ENCODE measurements at regions of chr9 and their contacts with region 1.

Region 1: DNA sequence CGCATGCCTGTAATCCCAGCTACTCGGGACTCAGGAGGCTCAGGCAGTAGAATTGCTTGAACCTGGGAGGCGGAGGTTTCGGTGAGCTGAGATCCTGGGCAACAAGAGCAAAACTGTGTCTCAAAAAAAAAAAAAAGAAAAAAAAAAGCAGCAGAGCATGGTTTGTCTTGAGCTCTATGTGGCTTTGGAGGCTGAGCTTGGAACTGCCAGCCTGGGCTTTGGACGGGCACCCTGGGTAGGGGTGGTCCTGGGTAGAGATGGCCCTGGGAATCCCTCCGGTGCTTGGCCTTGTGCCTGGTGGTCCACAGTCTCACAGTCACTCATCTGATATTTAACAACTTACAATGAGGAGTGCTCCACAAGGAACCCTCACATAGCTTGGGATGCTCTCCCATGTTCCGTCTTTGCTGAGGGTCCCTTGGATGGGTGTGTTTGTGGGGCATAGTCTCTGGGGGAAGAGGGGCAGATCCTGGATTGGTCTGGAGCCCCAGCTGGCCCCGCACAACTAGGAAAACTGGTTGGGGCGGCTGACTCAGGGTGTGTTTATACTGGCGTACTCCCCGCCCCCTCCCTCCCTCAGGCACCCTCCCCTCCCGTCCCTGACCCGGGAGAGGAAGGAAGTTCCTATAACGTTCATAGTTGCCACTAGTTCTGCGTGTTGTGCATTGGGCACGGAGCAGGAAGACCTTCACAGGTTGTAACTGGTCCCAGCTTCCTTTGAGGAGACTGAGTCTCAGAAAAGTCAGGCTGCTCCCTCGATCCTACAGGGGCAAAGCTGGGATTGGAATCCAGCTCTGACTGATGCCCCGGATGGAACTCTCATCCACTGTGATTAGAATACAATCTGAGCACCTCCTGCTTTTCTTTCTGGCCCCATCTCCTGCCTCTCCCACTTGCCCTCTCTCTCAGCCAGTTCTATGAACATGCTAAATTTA is 11.2 kb downstream of the IER5L start:
- DNase-seq: peak; percentile 90
- H3K4me3 ChIP-seq: no peak overlapping the region
- H3K27ac ChIP-seq: peak overlapping the region; percentile 88
- H3K4me1 ChIP-seq: peaks cover 31% of the 10 kb centered on the region
- H3K27me3 ChIP-seq: no peaks in the 10 kb centered on the region
- CTCF ChIP-seq: no peak
- POLR2A ChIP-seq: peak; percentile 66

Region 2: DNA sequence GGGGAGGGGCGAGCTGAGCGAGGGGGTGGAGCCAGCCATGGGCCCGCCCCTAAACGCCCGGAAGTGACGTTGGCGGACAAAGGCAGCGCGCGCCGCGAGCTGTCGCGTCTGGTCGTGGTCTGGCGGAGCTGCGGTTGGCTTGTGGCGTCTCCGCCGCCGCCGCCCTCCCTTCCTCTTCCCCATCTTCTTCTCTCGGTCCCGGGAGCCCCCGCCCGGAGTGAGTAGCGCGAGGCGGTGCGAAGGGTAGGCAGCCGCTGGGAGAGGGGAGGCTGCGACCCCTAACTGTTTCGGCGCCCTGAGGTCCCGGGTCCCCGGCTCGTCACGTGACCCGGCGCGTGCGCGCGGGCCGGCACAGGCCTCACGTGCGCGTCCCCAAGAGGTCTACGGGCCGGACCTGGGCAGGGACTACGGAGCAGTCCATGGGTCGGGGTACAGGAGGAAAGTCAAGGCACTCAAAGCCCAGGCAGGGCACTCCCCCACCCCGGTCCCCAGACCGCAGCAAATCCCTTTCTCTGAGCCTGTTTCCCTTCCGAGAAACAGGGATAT is 459.3 kb after region 1 on chr9 and contains the start of gene NTMT1:
- CTCF ChIA-PET with region 1: interaction called, 21 read pairs
- POLR2A ChIA-PET with region 1: no interaction called
- dilution Hi-C with region 1: no loop called
- intact Hi-C with region 1: no loop called
- DNase-seq: peak; percentile 84
- H3K4me3 ChIP-seq: peak within 1 kb of the TSS; percentile 35 to 76 (median 71)
- H3K27ac ChIP-seq: peak within 1 kb of the TSS; percentile 71
- H3K4me1 ChIP-seq: peaks cover 16% of the 10 kb centered on the region
- H3K27me3 ChIP-seq: no peaks in the 10 kb centered on the region
- CTCF ChIP-seq: no peak
- POLR2A ChIP-seq: peak; percentile 93
- total RNA-seq, gene NTMT1: 47.6 and 53.2 TPM in 2 replicates

Measured in endothelial cell of umbilical vein (primary cell).